ENCODE measurements at regions of chr12 and their contacts with region 1.

Region 1: GRCh38 chr12:65182012-65182739 is 12.8 kb downstream of the LEMD3 start:
- DNase-seq: no peak
- CTCF ChIP-seq: no peak

Region 2: GRCh38 chr12:65195387-65196055 is 13.3 kb after region 1 on chr12:
- CTCF ChIA-PET with region 1: interaction called, 18 read pairs
- POLR2A ChIA-PET with region 1: no interaction called
- DNase-seq: no peak
- CTCF ChIP-seq: no peak